ENCODE measurements at regions of chr9 and their contacts with region 1.

Region 1: GRCh38 chr9:91604451-91605179 is 181.0 kb upstream of the NFIL3 start:
- DNase-seq: no peak
- H3K4me3 ChIP-seq: no peak overlapping the region
- H3K4me3 Mint-ChIP-seq: no peak overlapping the region
- H3K27ac Mint-ChIP-seq: peak overlapping the region; percentile 92
- H3K4me1 ChIP-seq: peaks cover 43% of the 10 kb centered on the region
- H3K4me1 Mint-ChIP-seq: peaks cover 26% of the 10 kb centered on the region
- H3K27me3 ChIP-seq: no peaks in the 10 kb centered on the region
- H3K27me3 Mint-ChIP-seq: no peaks in the 10 kb centered on the region
- CTCF ChIP-seq: no peak

Region 2: DNA sequence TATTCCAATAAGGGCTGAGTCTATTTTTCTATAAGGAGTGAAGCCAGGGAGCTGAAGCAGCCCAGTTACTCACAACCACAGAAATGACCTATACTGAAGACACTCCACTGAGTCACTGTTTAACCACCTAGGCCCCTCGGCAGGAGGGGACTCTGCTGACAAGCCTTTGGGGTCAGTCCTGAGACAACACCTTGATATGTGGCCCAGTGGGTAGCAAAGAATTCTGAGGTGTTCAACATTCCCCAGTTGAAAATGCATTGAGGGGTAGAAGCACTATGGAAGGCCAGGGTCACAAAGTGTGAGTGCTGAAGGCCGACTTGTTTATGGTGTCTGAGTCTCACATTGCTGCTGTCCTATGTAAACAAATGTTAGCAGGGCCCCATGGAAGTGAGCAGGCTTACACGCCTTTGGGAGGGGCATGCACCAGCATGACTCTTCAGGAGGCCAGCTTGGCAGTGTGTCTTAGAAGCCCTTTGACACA is 68.4 kb before region 1 on chr9:
- CTCF ChIA-PET with region 1: no interaction called
- POLR2A ChIA-PET with region 1: no interaction called
- intact Hi-C with region 1: loop called (anchors 10 kb)
- DNase-seq: peak; percentile 53 to 79
- H3K4me3 ChIP-seq: no peak overlapping the region
- H3K4me3 Mint-ChIP-seq: no peak overlapping the region
- H3K27ac Mint-ChIP-seq: peak overlapping the region; percentile 48
- H3K4me1 ChIP-seq: peaks cover 14% of the 10 kb centered on the region
- H3K4me1 Mint-ChIP-seq: peaks cover under 1% of the 10 kb centered on the region
- H3K27me3 ChIP-seq: no peaks in the 10 kb centered on the region
- H3K27me3 Mint-ChIP-seq: no peaks in the 10 kb centered on the region
- CTCF ChIP-seq: no peak

Region 3: GRCh38 chr9:91643481-91644077 is 39.0 kb after region 1 on chr9:
- CTCF ChIA-PET with region 1: no interaction called
- POLR2A ChIA-PET with region 1: no interaction called
- intact Hi-C with region 1: no loop called
- DNase-seq: no peak
- H3K4me3 ChIP-seq: no peak overlapping the region
- H3K4me3 Mint-ChIP-seq: no peak overlapping the region
- H3K27ac Mint-ChIP-seq: no peak overlapping the region
- H3K4me1 ChIP-seq: no peaks in the 10 kb centered on the region
- H3K4me1 Mint-ChIP-seq: peaks cover 7% of the 10 kb centered on the region
- H3K27me3 ChIP-seq: no peaks in the 10 kb centered on the region
- H3K27me3 Mint-ChIP-seq: no peaks in the 10 kb centered on the region
- CTCF ChIP-seq: no peak

Region 4: DNA sequence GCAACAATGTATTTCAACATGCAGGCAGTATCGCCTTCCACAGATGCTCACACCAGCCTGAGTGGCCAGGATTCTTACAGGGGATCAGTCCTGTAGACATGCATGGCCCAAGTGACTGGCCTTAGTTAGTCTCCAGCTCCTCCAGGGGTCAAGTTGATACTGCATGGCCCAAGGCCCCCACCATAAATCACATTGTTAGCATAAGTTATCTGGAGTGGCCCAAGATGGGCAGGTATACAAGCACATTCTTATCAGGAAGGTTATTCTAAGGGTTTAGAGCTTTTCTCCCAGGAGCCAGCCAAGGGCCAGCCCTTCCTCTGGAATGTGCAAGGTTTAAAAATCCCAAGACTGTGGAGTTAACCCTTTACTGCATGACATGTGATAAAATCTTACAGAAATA is 49.9 kb after region 1 on chr9:
- CTCF ChIA-PET with region 1: no interaction called
- POLR2A ChIA-PET with region 1: no interaction called
- intact Hi-C with region 1: loop called (anchors 5 kb)
- DNase-seq: peak; percentile 70 to 85
- H3K4me3 ChIP-seq: no peak overlapping the region
- H3K4me3 Mint-ChIP-seq: no peak overlapping the region
- H3K27ac Mint-ChIP-seq: no peak overlapping the region
- H3K4me1 ChIP-seq: peaks cover 13% of the 10 kb centered on the region
- H3K4me1 Mint-ChIP-seq: peaks cover 19% of the 10 kb centered on the region
- H3K27me3 ChIP-seq: no peaks in the 10 kb centered on the region
- H3K27me3 Mint-ChIP-seq: no peaks in the 10 kb centered on the region
- CTCF ChIP-seq: peak in 1 of 2 experiments; percentile 11